Left colon (tissue), 2 donors: ENCODE measurements at regions of chr17 and their contacts with region 1.

Region 1: GRCh38 chr17:7897773-7898172 is 9.2 kb downstream of the CHD3 start:
- DNase-seq: peak in 1 of 2 donors; percentile 27
- ATAC-seq: peak; percentile 97

Region 2: GRCh38 chr17:7862692-7863437 is 34.9 kb before region 1 on chr17:
- intact Hi-C with region 1: loop called in 1 of 2 experiments (anchors 5 kb)
- DNase-seq: peak in 1 of 2 donors; percentile 50
- ATAC-seq: no peak

Region 3: DNA sequence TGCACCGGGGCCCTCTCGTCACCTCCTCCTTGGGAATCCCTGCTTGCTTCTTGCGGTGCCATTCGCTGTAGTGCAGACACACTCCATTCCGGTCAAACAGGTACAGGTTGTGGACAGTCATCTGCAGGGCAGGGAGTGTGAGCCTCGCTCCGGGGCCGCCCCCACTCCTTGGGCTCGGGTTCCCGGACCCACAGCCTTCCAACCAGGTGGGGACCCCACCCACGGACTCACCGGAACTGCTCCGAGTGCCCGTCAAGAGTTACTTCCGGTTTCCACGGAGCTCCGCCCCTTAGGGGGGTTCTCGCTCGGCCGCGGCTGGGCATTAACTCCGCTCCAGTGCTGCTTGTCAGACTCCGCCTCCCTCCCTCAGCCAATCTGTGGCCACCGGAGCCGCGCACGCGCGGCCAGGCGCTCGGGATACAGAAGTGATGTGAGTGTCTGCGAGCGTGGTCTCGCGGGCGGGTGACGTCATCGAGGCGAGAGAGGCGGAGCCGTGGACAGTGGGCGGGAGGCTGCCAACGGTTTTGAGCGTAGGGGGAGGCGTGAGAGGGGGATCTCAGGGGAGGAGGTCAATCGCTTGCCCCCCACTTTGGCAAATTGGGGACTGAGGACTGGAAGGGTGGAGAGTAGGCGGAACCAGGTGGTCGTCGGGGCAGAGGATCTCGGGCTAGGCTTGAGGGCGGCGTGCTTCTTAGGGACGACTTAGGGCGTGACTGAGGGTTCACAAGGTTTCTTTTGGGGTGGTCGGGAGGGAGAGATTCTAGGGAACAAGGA is 34.1 kb after region 1 on chr17 and contains the starts of genes CNTROB and TRAPPC1:
- intact Hi-C with region 1: no loop called
- DNase-seq: peak; percentile 99 to 100
- ATAC-seq: peak; percentile 96
- total RNA-seq, gene CNTROB: 25.8 to 26.7 TPM
- total RNA-seq, gene TRAPPC1: 121 to 122 TPM

Region 4: DNA sequence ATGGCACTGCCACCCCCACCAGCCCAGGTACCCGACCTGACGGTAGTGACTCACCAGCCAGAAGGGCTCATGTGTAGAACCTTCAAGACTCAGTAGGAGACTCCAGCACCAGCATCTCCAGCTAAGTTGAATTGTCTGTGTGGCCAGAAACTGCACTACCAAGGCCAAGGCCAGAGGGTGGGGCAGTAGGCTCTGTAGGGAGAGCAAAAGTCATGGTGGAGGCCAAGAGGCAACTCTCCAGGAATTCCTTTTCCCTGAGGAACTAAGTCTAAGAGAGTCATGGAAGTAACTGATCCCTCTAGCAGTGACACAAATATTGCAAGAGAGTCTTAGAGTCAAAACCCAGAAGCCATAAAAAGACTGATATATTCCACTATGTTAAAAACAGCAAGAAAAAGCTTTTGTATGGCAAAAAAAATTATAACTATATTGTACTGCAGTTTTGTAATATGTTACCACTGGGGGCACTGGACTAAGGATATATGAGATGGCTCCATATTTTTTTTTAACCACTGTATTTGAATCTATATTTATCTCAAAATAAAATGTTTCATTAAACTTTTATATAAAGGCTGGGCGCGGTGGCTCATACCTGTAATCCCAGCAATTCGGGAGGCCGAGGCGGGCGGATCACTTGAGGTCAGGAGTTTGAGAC is 74.5 kb after region 1 on chr17:
- intact Hi-C with region 1: no loop called
- DNase-seq: no peak
- ATAC-seq: peak; percentile 36

Region 5: DNA sequence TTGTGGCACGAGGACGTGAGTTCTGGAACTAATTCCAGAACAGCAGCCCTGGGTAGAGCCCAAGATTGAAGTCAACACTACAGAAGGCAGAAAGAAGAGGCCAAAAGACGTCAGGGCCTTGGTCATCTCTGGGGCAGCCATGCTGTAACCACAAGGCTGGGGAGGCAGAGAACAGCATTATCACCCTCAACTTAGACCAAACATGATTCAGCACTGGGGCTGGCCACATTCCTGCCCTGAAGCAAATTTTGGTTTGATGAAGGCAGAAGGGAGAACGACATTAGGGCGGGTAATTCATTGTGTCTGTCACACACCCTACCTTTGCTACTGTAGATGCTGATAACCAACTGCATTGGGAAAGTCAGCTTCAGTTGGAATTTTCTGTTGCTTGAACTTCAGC is 131.4 kb after region 1 on chr17:
- intact Hi-C with region 1: no loop called
- DNase-seq: no peak
- ATAC-seq: no peak